Activated CD8-positive, alpha-beta T cell treated with anti-CD3 and anti-CD28 coated beads, Interleukin-2, amount 10 ng/mL, durations not matched to agents 7 days and 5 days (primary cell): ENCODE measurements at regions of chr2 and their contacts with region 1.

Region 1: GRCh38 chr2:219119422-219120043 is 41.1 kb downstream of the NHEJ1 start:
- DNase-seq: peak; percentile 74
- ATAC-seq: peak; percentile 57
- H3K4me3 Mint-ChIP-seq: no peak overlapping the region
- H3K27ac Mint-ChIP-seq: no peak overlapping the region
- H3K4me1 Mint-ChIP-seq: peaks cover 6% of the 10 kb centered on the region
- H3K27me3 Mint-ChIP-seq: no peaks in the 10 kb centered on the region

Region 2: DNA sequence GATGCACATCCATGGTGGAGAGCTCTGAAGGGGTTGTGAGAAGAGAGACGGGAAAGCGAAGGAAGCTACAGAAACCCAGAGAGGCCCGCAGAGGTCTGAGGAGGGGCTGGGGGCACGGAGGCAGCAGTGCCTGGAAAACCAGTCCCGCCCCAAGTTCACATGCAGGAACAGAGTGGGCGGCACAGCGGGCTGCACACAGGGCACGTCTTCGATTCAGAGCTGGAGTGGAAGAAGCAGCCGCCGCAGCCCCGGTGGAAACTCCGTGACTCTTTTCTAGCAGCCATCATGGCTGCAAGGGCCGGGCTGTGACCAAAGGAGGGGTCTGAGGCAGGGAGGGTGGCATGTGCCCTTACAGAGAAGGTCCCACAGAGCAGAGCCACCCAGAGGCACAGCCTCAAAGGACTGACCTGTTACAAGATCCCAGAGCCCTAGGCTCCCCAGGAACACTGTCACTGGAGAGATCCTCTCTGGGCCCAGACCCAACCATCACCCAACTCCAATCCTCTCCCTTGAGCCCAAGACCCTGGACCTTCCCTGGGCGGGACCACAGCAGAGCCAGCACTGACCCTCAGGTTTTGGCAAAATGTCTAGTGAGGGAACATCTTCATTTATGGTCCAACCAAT is 298.7 kb before region 1 on chr2:
- CTCF ChIA-PET with region 1: no interaction called
- POLR2A ChIA-PET with region 1: no interaction called
- DNase-seq: no peak
- ATAC-seq: no peak
- H3K4me3 Mint-ChIP-seq: no peak overlapping the region
- H3K27ac Mint-ChIP-seq: no peak overlapping the region
- H3K4me1 Mint-ChIP-seq: no peaks in the 10 kb centered on the region
- H3K27me3 Mint-ChIP-seq: peaks cover 14% of the 10 kb centered on the region

Region 3: DNA sequence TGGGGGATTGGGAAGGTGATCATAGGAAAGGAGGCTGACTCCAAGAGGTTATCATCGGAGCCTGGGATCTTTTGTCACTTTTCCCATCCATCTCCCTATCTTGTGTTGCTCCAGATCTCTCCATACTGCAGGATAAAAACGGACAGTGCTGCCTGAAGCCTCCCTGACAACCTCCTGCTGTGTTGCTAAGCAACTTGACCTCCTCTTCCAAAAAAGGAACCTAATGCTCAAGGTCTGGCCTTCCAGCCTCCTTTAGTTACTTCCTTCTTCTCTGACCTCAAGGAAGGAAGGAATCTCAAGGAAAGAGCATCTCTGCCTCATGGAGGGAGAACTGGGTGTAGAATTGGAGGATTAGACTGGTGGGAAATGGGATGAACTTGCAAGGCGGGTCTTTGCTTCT is 146.8 kb before region 1 on chr2:
- CTCF ChIA-PET with region 1: no interaction called
- POLR2A ChIA-PET with region 1: no interaction called
- DNase-seq: no peak
- ATAC-seq: no peak
- H3K4me3 Mint-ChIP-seq: no peak overlapping the region
- H3K27ac Mint-ChIP-seq: no peak overlapping the region
- H3K4me1 Mint-ChIP-seq: no peaks in the 10 kb centered on the region
- H3K27me3 Mint-ChIP-seq: peaks cover 56% of the 10 kb centered on the region

Region 4: DNA sequence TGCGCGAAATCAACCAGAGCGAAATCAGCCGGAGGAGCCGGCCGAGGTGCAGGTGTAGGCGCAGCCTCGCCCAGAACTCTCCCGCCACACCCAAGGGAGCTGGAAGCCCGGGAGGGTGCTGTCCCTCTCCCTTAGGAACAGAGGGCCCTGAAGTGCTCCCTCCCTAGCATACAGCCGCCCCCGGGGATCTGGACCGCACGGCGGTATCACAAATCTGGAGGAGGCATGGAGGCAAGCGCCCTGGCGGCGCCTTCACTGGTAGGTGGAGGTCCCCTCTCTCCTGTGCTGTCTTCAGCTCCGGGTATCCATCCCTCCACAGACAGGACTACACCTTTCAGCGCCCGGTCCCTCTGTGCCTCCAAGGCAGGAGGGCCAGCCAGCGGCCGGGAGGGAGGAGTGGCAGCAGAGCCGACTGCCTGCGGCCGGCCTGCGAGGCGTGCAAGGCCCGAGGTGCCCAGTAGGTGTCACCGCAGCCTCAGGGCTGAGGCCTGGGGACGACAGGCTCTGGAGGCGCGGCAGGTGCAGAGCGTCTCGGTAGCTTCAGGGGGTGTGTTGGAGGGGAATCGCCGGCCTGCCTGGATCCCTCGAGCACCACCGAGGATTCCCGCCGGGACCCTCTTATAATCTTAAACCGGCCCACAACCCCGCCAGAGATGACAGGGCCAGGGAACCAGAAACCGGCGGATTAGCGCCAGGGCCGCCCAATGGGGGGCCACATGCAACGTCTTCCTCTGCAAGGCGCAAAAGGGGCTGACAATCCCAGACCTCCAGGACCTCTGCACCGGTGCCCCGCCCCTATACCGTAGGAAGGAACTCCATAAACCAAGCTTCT is 61.6 kb before region 1 on chr2:
- CTCF ChIA-PET with region 1: interaction called, 64 read pairs
- POLR2A ChIA-PET with region 1: no interaction called
- DNase-seq: peak; percentile 82
- ATAC-seq: peak; percentile 92
- H3K4me3 Mint-ChIP-seq: peak overlapping the region; percentile 42
- H3K27ac Mint-ChIP-seq: no peak overlapping the region
- H3K4me1 Mint-ChIP-seq: peaks cover 21% of the 10 kb centered on the region
- H3K27me3 Mint-ChIP-seq: peaks cover 62% of the 10 kb centered on the region

Region 5: GRCh38 chr2:219086196-219086595 is 33.3 kb before region 1 on chr2:
- CTCF ChIA-PET with region 1: interaction called, 14 read pairs
- POLR2A ChIA-PET with region 1: interaction called, 3 read pairs
- DNase-seq: no peak
- ATAC-seq: no peak
- H3K4me3 Mint-ChIP-seq: no peak overlapping the region
- H3K27ac Mint-ChIP-seq: no peak overlapping the region
- H3K4me1 Mint-ChIP-seq: peaks cover 19% of the 10 kb centered on the region
- H3K27me3 Mint-ChIP-seq: no peaks in the 10 kb centered on the region

Region 6: DNA sequence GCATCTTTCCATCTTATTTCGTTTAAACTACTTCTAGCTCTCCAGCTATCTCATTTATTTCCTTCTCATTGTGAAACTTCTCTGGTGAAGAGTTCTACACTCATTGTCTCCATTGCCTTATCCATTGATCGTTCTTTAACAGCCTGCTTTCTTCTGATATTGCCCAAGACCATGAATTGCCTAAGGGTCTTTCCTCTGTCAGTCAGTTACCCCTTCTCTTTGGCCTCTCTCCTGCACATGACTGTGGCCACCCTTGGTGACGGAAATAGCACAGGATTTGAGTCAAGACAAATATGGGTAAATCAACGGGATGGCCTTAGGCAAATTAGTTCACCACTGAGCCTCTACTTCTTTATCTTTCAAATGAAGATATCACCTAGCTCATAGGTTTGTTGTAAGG is 14.4 kb after region 1 on chr2:
- CTCF ChIA-PET with region 1: interaction called, 23 read pairs
- POLR2A ChIA-PET with region 1: no interaction called
- DNase-seq: no peak
- ATAC-seq: no peak
- H3K4me3 Mint-ChIP-seq: no peak overlapping the region
- H3K27ac Mint-ChIP-seq: no peak overlapping the region
- H3K4me1 Mint-ChIP-seq: no peaks in the 10 kb centered on the region
- H3K27me3 Mint-ChIP-seq: no peaks in the 10 kb centered on the region